Ovary (tissue), 10 donors: ENCODE measurements at regions of chr6 and their contacts with region 1.

Region 1: GRCh38 chr6:25851961-25852360 is 20.1 kb upstream of the SLC17A1 start:
- DNase-seq: no peak
- H3K4me3 ChIP-seq: no peak overlapping the region
- H3K27ac ChIP-seq: no peak overlapping the region
- H3K4me1 ChIP-seq: no peaks in the 10 kb centered on the region
- H3K27me3 ChIP-seq: no peaks in the 10 kb centered on the region
- CTCF ChIP-seq: no peak
- EP300 ChIP-seq: no peak
- POLR2A ChIP-seq: no peak

Region 2: GRCh38 chr6:25816252-25816651 is 35.7 kb before region 1 on chr6:
- intact Hi-C with region 1: loop called in 1 of 4 experiments (anchors 2 kb)
- DNase-seq: no peak
- H3K4me3 ChIP-seq: no peak overlapping the region
- H3K27ac ChIP-seq: no peak overlapping the region
- H3K4me1 ChIP-seq: no peaks in the 10 kb centered on the region
- H3K27me3 ChIP-seq: no peaks in the 10 kb centered on the region
- CTCF ChIP-seq: no peak
- EP300 ChIP-seq: no peak
- POLR2A ChIP-seq: no peak